ENCODE measurements at regions of chr10 and their contacts with region 1.

Region 1: DNA sequence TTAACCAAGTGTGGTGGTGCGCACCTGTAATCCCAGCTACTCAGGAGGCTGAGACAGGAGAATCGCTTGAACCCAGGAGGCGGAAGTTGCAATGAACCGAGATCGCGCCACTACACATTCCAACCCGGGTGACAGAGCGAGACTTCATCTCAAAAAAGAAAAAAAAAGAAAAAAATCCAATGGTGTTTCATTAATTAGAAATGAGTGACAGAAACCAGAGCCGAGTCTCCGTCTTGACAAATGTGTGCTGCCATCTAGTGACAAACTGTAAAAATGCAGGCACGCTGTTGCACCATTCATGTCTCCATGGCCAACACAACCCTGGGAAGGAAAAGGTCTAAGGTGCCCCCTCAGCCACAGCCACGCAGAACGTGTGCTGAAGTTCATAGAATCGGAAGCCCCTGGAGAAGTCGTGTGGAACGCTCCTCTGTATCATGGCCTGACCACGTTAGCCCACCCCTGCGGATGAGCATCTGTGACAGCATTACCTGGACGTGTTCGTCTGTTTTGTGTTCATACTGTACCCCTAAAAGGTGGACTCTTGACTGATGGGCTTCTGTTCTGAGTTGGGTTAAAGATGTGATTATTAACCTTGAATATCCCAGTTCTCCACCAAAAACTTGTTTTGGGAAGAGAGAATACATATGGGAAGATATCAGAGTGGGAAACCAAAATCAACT is 94.9 kb downstream of the LYZL2 start:
- DNase-seq: peak; percentile 41 to 88 (median 72)
- ATAC-seq: peak; percentile 43
- H3K4me3 ChIP-seq: no peak overlapping the region
- H3K4me3 Mint-ChIP-seq: no peak overlapping the region
- H3K27ac ChIP-seq: no peak overlapping the region
- H3K27ac Mint-ChIP-seq: no peak overlapping the region
- H3K4me1 ChIP-seq: peaks cover 7% of the 10 kb centered on the region
- H3K4me1 Mint-ChIP-seq: peaks cover 29% of the 10 kb centered on the region
- H3K27me3 ChIP-seq: no peaks in the 10 kb centered on the region
- H3K27me3 Mint-ChIP-seq: no peaks in the 10 kb centered on the region
- CTCF ChIP-seq: peak; percentile 92

Region 2: GRCh38 chr10:29998142-29998808 is 536.3 kb before region 1 on chr10:
- CTCF ChIA-PET with region 1: interaction called, 4 read pairs
- POLR2A ChIA-PET with region 1: no interaction called
- intact Hi-C with region 1: loop called (anchors 1 to 5 kb)
- DNase-seq: peak; percentile 57 to 86 (median 77)
- ATAC-seq: peak; percentile 95
- H3K4me3 ChIP-seq: no peak overlapping the region
- H3K4me3 Mint-ChIP-seq: no peak overlapping the region
- H3K27ac ChIP-seq: no peak overlapping the region
- H3K27ac Mint-ChIP-seq: no peak overlapping the region
- H3K4me1 ChIP-seq: no peaks in the 10 kb centered on the region
- H3K4me1 Mint-ChIP-seq: peaks cover 5% of the 10 kb centered on the region
- H3K27me3 ChIP-seq: peaks cover 8% of the 10 kb centered on the region in 2 experiments
- H3K27me3 Mint-ChIP-seq: peaks cover 49% of the 10 kb centered on the region
- CTCF ChIP-seq: peak; percentile 99

Region 3: GRCh38 chr10:30348378-30348776 is 186.2 kb before region 1 on chr10:
- CTCF ChIA-PET with region 1: interaction called, 4 read pairs
- POLR2A ChIA-PET with region 1: interaction called, 4 read pairs
- intact Hi-C with region 1: loop called (anchors 2 to 5 kb)
- DNase-seq: no peak
- ATAC-seq: peak; percentile 16
- H3K4me3 ChIP-seq: peak overlapping the region; percentile 95 to 98
- H3K4me3 Mint-ChIP-seq: peak overlapping the region; percentile 91
- H3K27ac ChIP-seq: peak overlapping the region; percentile 79 to 84
- H3K27ac Mint-ChIP-seq: peak overlapping the region; percentile 95
- H3K4me1 ChIP-seq: peaks cover 38% of the 10 kb centered on the region
- H3K4me1 Mint-ChIP-seq: peaks cover 51% of the 10 kb centered on the region
- H3K27me3 ChIP-seq: no peaks in the 10 kb centered on the region
- H3K27me3 Mint-ChIP-seq: no peaks in the 10 kb centered on the region
- CTCF ChIP-seq: no peak

Region 4: DNA sequence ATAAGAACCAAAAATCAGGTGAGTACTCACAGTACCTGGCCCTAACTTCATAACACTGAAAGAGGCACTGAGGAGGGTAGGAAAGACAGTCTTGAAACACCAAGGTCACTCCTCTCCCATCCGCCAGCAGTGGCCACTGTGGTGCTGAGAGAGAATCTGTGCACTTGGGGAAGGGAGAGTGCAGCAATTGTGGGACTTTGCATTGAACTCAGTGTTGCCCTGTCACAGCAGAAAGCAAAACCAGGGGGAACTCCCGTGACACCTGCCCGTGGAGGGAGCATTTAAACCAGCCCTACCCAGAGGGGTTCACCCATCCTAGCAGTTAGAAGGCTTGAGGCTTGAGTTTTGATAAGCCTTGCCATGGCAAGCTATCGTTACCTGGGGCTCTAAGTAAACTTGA is 135.8 kb before region 1 on chr10:
- CTCF ChIA-PET with region 1: interaction called, 30 read pairs
- POLR2A ChIA-PET with region 1: interaction called, 3 read pairs
- intact Hi-C with region 1: no loop called
- DNase-seq: peak in 2 of 9 experiments; percentile 19 to 52
- ATAC-seq: peak; percentile 76
- H3K4me3 ChIP-seq: no peak overlapping the region
- H3K4me3 Mint-ChIP-seq: no peak overlapping the region
- H3K27ac ChIP-seq: no peak overlapping the region
- H3K27ac Mint-ChIP-seq: no peak overlapping the region
- H3K4me1 ChIP-seq: peaks cover 28% of the 10 kb centered on the region
- H3K4me1 Mint-ChIP-seq: peaks cover 15% of the 10 kb centered on the region
- H3K27me3 ChIP-seq: no peaks in the 10 kb centered on the region
- H3K27me3 Mint-ChIP-seq: peaks cover 8% of the 10 kb centered on the region
- CTCF ChIP-seq: no peak

Region 5: DNA sequence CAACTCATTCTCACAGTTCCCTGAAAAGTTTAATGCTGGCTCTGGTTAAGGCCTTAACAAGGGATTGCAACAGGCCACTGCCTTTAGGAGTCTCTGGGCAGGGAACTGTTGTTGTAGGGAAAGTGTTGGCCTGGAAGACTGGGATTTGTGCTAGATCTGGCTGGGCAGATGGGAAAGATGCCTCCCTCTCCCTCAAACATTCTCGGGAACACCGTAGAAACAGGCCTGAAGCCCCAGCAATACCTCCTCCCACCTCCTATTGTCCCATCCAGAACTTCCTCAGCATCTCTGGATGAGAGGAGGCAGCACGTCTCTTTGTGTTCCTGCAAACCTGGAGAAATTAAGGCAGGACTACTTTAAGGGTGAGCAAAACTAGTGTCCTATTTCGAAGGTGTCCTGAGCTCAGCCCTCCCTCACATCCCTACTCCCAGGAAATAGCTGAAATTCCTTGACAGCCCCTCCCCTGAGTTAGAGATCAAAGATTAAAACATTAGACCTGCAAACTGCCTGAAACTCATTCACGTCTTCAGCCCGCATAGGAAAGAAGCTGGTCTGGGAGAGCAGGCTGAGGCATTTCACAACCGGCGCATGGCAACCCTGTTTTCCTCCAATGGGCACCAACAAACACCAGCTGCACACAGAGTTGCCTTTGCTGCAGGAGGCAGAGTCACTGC is 111.5 kb before region 1 on chr10:
- CTCF ChIA-PET with region 1: interaction called, 50 read pairs
- POLR2A ChIA-PET with region 1: interaction called, 9 read pairs
- intact Hi-C with region 1: no loop called
- DNase-seq: no peak
- ATAC-seq: no peak
- H3K4me3 ChIP-seq: no peak overlapping the region
- H3K4me3 Mint-ChIP-seq: no peak overlapping the region
- H3K27ac ChIP-seq: no peak overlapping the region
- H3K27ac Mint-ChIP-seq: no peak overlapping the region
- H3K4me1 ChIP-seq: peaks cover 10% of the 10 kb centered on the region
- H3K4me1 Mint-ChIP-seq: peaks cover 27% of the 10 kb centered on the region
- H3K27me3 ChIP-seq: no peaks in the 10 kb centered on the region
- H3K27me3 Mint-ChIP-seq: no peaks in the 10 kb centered on the region
- CTCF ChIP-seq: no peak

Region 6: DNA sequence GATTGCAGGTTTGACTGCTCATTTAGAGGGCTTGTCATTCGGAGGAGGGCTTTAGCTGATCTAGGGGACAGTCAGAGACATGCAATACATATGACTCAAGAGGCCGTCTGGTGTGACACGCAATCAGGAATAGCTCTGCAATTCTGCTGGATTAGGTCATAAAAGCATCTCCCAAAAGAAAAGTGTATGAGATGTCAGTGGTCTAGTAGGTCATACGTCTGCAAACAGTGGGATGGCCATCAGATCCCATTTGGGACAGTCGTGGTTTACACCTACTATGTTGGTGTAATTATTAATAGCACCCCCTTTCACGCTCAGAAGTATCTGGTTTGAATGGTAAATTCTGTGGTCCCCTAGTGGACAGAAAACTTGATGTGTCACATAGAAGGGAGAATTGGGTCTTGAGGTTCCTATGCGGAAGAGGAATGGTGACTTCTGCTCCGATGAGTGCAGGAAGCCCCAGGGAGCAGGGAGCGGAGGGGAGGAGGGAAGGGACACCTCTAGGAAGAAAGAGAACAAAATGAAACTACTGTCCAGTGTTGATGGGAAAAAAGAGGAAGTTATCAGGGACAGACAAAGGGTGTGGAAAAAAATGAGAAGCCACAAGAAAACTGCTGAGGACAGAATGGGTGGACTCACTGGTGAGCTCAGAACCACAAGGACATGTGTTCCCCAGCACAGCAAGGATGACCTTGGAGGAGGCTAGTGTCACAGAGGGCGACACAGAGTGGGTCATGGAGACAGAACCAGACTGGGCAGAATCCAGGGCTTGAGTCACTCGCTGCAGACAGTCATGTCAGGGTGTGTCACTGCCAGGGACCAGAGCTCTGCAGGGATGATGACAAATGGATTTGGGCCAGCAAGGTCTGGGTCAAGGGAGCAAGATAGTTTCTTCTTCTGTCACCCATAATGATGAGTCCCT is 40.7 kb before region 1 on chr10:
- CTCF ChIA-PET with region 1: interaction called, 6 read pairs
- POLR2A ChIA-PET with region 1: interaction called, 4 read pairs
- intact Hi-C with region 1: loop called (anchors 5 kb)
- DNase-seq: peak in 1 of 9 experiments; percentile 50
- ATAC-seq: no peak
- H3K4me3 ChIP-seq: no peak overlapping the region
- H3K4me3 Mint-ChIP-seq: no peak overlapping the region
- H3K27ac ChIP-seq: peak overlapping the region in 1 of 2 experiments; percentile 34
- H3K27ac Mint-ChIP-seq: peak overlapping the region; percentile 37
- H3K4me1 ChIP-seq: peaks cover 48% of the 10 kb centered on the region
- H3K4me1 Mint-ChIP-seq: peaks cover 72% of the 10 kb centered on the region
- H3K27me3 ChIP-seq: no peaks in the 10 kb centered on the region
- H3K27me3 Mint-ChIP-seq: no peaks in the 10 kb centered on the region
- CTCF ChIP-seq: no peak

Region 7: DNA sequence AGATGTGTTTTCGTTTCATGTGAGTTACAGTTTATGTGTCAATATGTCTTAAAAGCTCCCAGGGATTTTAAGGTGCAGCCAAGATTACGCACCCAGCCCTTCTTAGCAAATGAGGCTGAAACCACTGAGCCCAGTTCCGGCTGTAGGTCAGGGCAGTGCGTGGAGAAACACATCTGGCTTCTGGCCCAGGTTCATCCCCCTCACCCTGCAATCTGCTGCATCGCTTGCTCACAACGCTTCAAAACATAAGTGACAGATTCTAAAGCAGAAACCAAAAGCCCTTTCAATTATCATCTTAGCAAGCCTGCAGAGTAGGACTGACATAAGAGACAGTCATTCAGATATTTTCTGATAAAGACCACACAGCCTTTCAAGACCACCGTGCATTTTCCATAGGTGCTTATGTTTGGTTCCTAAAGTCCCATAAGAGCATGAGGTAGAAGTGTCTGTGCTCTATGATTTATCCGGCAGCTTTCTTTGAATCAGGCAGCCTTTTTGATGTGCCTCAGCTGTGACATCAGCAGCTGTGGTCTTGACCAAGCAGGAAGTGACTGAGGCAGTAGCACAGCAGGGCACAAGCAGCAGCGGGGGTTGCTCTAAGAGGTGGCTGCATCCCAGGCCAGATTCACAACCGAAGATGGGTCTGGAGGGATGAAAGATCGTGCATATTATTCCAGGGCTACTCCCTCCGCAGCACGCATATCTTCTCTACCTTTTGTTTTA is 167.0 kb after region 1 on chr10:
- CTCF ChIA-PET with region 1: no interaction called
- POLR2A ChIA-PET with region 1: interaction called, 4 read pairs
- intact Hi-C with region 1: loop called (anchors 5 to 10 kb)
- DNase-seq: peak; percentile 41 to 92 (median 74)
- ATAC-seq: peak; percentile 70
- H3K4me3 ChIP-seq: peak overlapping the region; percentile 1 to 43
- H3K4me3 Mint-ChIP-seq: peak overlapping the region; percentile 78
- H3K27ac ChIP-seq: peak overlapping the region; percentile 48 to 81
- H3K27ac Mint-ChIP-seq: peak overlapping the region; percentile 95
- H3K4me1 ChIP-seq: peaks cover 74% of the 10 kb centered on the region
- H3K4me1 Mint-ChIP-seq: peaks cover 83% of the 10 kb centered on the region
- H3K27me3 ChIP-seq: no peaks in the 10 kb centered on the region
- H3K27me3 Mint-ChIP-seq: no peaks in the 10 kb centered on the region
- CTCF ChIP-seq: no peak

Measured in CD8-positive, alpha-beta T cell (primary cell).